ENCODE measurements at regions of chr17 and their contacts with region 1.

Region 1: GRCh38 chr17:21511363-21512198 is 135.4 kb downstream of the KCNJ12 start:
- DNase-seq: peak; percentile 31 to 68 (median 52)
- ATAC-seq: peak; percentile 86
- H3K4me3 ChIP-seq: peak overlapping the region; percentile 62
- H3K4me3 Mint-ChIP-seq: peak overlapping the region; percentile 54 to 82 (median 72)
- H3K27ac ChIP-seq: no peak overlapping the region
- H3K27ac Mint-ChIP-seq: peak overlapping the region in 3 of 9 donors; percentile 1 to 52 (median 38)
- H3K4me1 ChIP-seq: peaks cover 6 to 9% of the 10 kb centered on the region in 2 donors
- H3K4me1 Mint-ChIP-seq: peaks cover 0 to 21% (median 6%) of the 10 kb centered on the region in 7 donors
- H3K27me3 ChIP-seq: peaks cover 4 to 6% of the 10 kb centered on the region in 2 donors
- H3K27me3 Mint-ChIP-seq: peaks cover 22 to 67% (median 32%) of the 10 kb centered on the region in 5 donors

Region 2: GRCh38 chr17:20800146-20800545 is 711.4 kb before region 1 on chr17:
- CTCF ChIA-PET with region 1: no interaction called
- POLR2A ChIA-PET with region 1: no interaction called
- intact Hi-C with region 1: loop called in 1 of 2 experiments (anchors 5 kb)
- DNase-seq: no peak
- ATAC-seq: no peak
- H3K4me3 ChIP-seq: no peak overlapping the region
- H3K4me3 Mint-ChIP-seq: no peak overlapping the region
- H3K27ac ChIP-seq: no peak overlapping the region
- H3K27ac Mint-ChIP-seq: no peak overlapping the region
- H3K4me1 ChIP-seq: no peaks in the 10 kb centered on the region
- H3K4me1 Mint-ChIP-seq: peaks cover 0 to 16% (median 6%) of the 10 kb centered on the region in 7 donors
- H3K27me3 ChIP-seq: no peaks in the 10 kb centered on the region
- H3K27me3 Mint-ChIP-seq: peaks cover 0 to 4% (median 0%) of the 10 kb centered on the region in 5 donors

Region 3: GRCh38 chr17:20944014-20944865 is 567.3 kb before region 1 on chr17:
- CTCF ChIA-PET with region 1: interaction called, 5 read pairs
- POLR2A ChIA-PET with region 1: no interaction called
- intact Hi-C with region 1: loop called in 1 of 2 experiments (anchors 1 kb)
- DNase-seq: peak in 5 of 9 donors; percentile 23 to 36 (median 25)
- ATAC-seq: peak; percentile 69
- H3K4me3 ChIP-seq: no peak overlapping the region
- H3K4me3 Mint-ChIP-seq: no peak overlapping the region
- H3K27ac ChIP-seq: no peak overlapping the region
- H3K27ac Mint-ChIP-seq: peak overlapping the region in 1 of 9 donors; percentile 29
- H3K4me1 ChIP-seq: no peaks in the 10 kb centered on the region
- H3K4me1 Mint-ChIP-seq: peaks cover 0 to 4% (median 0%) of the 10 kb centered on the region in 7 donors
- H3K27me3 ChIP-seq: no peaks in the 10 kb centered on the region
- H3K27me3 Mint-ChIP-seq: peaks cover 0 to 13% (median 5%) of the 10 kb centered on the region in 5 donors

Region 4: DNA sequence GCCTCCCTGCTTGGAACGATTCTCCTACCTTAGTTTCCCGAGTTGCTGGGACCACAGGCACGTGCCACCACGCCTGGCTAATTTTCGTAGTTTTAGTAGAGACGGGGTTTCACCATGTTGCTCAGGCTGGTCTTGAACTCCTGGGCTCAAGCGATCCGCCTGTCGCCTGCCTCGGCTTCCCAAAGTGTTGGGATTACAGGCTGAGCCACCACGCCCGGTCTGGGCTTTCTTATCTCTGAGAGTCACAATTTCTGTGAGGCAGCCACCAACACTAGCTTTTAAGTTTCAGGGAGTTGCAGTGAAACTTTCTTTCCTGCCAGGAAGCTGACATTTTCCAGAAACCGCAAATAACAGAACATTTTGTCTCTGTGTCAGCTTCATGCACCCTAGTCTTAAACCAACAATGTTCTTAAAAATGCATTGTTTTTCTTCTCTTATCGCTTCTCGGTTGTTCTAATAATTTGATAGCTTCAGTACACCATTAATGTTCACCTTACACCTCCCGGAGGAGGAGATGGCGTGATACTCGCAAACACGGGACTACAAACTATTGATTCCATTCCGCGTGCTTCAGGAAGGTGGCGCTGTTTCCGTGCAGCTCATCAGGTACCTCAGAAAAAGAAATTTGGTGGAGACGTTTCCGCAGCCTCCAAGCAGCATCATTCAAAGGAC is 392.2 kb before region 1 on chr17:
- CTCF ChIA-PET with region 1: interaction called, 57 read pairs
- POLR2A ChIA-PET with region 1: no interaction called
- intact Hi-C with region 1: loop called (anchors 1 kb)
- DNase-seq: peak; percentile 36 to 76 (median 62)
- ATAC-seq: peak; percentile 91
- H3K4me3 ChIP-seq: no peak overlapping the region
- H3K4me3 Mint-ChIP-seq: peak overlapping the region in 7 of 10 donors; percentile 1 to 72 (median 40)
- H3K27ac ChIP-seq: no peak overlapping the region
- H3K27ac Mint-ChIP-seq: peak overlapping the region in 3 of 9 donors; percentile 6 to 47 (median 35)
- H3K4me1 ChIP-seq: peaks cover 0 to 5% of the 10 kb centered on the region in 2 donors
- H3K4me1 Mint-ChIP-seq: peaks cover 6 to 15% (median 10%) of the 10 kb centered on the region in 7 donors
- H3K27me3 ChIP-seq: no peaks in the 10 kb centered on the region
- H3K27me3 Mint-ChIP-seq: peaks cover 0 to 16% (median 5%) of the 10 kb centered on the region in 5 donors

Region 5: DNA sequence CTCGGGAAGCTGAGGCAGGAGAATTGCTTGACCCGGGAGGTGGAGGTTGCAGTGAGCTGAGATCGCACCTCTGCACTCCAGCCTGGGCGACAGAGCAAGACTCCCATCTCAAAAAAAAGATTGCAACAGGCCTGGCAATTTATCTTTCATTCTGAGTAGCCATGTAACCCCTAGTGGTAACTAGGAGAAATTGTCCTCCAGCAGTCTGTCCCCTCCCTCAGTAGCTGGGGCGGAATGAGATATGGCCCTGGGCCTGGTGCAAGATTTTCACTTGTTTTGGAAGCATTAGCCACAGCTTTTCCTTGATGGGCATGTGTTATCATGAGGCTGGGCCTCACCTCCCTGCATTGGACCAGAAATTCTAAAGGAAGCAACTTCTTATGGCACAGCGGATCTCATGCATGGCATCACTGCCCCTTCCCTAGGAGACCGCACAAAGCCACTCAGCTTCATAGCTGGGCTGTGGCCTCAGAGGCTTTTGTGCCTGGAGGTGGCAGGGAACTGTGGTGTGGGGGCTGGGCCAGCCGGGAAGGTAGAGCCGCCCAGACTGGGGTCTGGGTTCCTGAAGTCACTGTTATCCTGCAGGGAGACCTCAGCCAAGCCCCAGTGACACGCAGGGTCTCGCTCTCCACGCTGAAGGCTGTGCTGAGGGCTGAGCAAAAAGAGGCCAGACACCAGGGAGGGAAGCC is 271.8 kb before region 1 on chr17:
- CTCF ChIA-PET with region 1: no interaction called
- POLR2A ChIA-PET with region 1: no interaction called
- intact Hi-C with region 1: no loop called
- DNase-seq: no peak
- ATAC-seq: peak; percentile 62
- H3K4me3 ChIP-seq: no peak overlapping the region
- H3K4me3 Mint-ChIP-seq: no peak overlapping the region
- H3K27ac ChIP-seq: no peak overlapping the region
- H3K27ac Mint-ChIP-seq: no peak overlapping the region
- H3K4me1 ChIP-seq: no peaks in the 10 kb centered on the region
- H3K4me1 Mint-ChIP-seq: peaks cover 0 to 10% (median 1%) of the 10 kb centered on the region in 7 donors
- H3K27me3 ChIP-seq: no peaks in the 10 kb centered on the region
- H3K27me3 Mint-ChIP-seq: no peaks in the 10 kb centered on the region

Region 6: GRCh38 chr17:21275579-21276263 is 235.9 kb before region 1 on chr17:
- CTCF ChIA-PET with region 1: interaction called, 34 read pairs
- POLR2A ChIA-PET with region 1: no interaction called
- intact Hi-C with region 1: loop called (anchors 1 kb)
- DNase-seq: peak; percentile 78 to 99 (median 86)
- ATAC-seq: peak; percentile 93
- H3K4me3 ChIP-seq: peak overlapping the region; percentile 71
- H3K4me3 Mint-ChIP-seq: peak overlapping the region; percentile 80 to 99 (median 94)
- H3K27ac ChIP-seq: peak overlapping the region; percentile 91
- H3K27ac Mint-ChIP-seq: peak overlapping the region; percentile 73 to 96 (median 92)
- H3K4me1 ChIP-seq: peaks cover 24 to 40% of the 10 kb centered on the region in 2 donors
- H3K4me1 Mint-ChIP-seq: peaks cover 34 to 52% (median 49%) of the 10 kb centered on the region in 7 donors
- H3K27me3 ChIP-seq: no peaks in the 10 kb centered on the region
- H3K27me3 Mint-ChIP-seq: no peaks in the 10 kb centered on the region

Region 7: GRCh38 chr17:21318439-21318838 is 193.1 kb before region 1 on chr17:
- CTCF ChIA-PET with region 1: interaction called, 3 read pairs
- POLR2A ChIA-PET with region 1: no interaction called
- intact Hi-C with region 1: loop called (anchors 2 to 10 kb)
- DNase-seq: no peak
- ATAC-seq: no peak
- H3K4me3 ChIP-seq: no peak overlapping the region
- H3K4me3 Mint-ChIP-seq: no peak overlapping the region
- H3K27ac ChIP-seq: no peak overlapping the region
- H3K27ac Mint-ChIP-seq: no peak overlapping the region
- H3K4me1 ChIP-seq: no peaks in the 10 kb centered on the region
- H3K4me1 Mint-ChIP-seq: peaks cover 0 to 7% (median 6%) of the 10 kb centered on the region in 7 donors
- H3K27me3 ChIP-seq: no peaks in the 10 kb centered on the region
- H3K27me3 Mint-ChIP-seq: peaks cover 0 to 5% (median 5%) of the 10 kb centered on the region in 5 donors